Naive thymus-derived CD4-positive, alpha-beta T cell (primary cell): ENCODE measurements at regions of chr13 and their contacts with region 1.

Region 1: DNA sequence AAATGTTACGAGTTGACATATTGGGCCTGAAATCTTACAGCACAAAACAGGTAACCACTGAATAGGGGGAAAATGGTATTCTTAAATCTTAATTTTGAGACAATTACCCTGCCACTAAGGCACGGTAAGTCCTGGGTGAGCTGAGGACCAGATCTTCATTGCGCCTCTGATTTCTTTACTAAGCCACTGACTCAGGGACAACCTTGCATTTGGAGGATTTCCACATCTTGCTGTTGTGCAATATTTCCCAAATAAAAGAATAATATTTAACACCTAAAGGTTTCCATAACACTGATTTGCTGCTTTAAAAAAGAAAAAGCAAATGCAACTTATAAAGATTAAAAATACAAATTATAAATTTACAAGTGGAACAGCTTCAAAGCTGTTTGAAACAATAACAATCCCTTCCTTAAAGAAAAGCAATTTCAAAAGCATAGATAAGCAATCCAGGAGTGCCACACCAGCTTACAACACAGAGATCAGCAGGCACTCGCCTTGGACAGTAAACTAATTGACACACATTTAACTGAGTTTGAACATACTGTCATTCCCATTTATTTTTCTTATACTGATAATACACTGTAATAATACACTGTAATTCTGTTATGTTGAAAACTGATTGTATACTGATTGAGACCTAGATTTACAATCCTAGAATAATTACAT is 79.6 kb upstream of the DOCK9 start:
- DNase-seq: no peak
- ATAC-seq: no peak
- H3K4me3 ChIP-seq: no peak overlapping the region
- H3K4me3 Mint-ChIP-seq: peak overlapping the region in 2 of 10 donors; percentile 8 to 50
- H3K27ac ChIP-seq: no peak overlapping the region
- H3K27ac Mint-ChIP-seq: peak overlapping the region in 8 of 9 donors; percentile 7 to 96 (median 74)
- H3K4me1 ChIP-seq: peaks cover 28 to 78% of the 10 kb centered on the region in 2 donors
- H3K4me1 Mint-ChIP-seq: peaks cover 46 to 99% (median 94%) of the 10 kb centered on the region in 7 donors
- H3K27me3 ChIP-seq: no peaks in the 10 kb centered on the region
- H3K27me3 Mint-ChIP-seq: peaks cover 0 to 19% (median 0%) of the 10 kb centered on the region in 5 donors

Region 2: DNA sequence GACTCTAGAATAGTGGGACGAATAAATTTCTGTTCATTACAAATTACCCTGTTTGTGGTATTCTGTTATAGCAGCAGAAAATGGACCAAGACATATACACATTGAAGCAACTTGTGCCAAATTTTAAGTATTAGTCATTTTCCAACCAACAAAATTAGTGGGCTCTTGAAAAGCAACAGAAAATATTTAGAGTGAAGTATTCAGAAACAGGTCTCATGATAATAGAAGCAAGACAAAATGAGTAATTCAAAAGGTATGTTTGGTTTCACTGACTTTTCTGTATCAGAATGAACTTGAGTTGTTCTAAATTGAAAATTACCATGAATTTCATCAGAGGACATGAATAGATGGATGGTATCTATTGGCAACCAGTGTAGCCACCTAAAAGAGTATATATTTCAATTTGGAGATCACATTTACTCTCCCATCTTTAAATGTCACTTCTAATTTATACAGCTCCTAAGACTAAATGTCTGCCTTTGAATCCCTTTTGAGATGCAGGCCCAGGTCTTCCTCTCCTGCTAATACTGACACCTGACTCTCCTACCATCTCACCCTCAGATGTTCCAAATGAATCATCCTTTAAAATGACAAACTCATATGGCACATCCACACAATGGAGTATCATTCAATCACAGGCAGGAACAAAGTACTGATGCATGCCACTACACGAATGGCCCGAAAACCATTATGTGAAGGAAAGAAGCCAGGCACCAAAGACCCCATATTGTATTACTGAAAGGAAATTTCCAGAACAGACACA is 38.8 kb before region 1 on chr13:
- CTCF ChIA-PET with region 1: no interaction called
- POLR2A ChIA-PET with region 1: no interaction called
- intact Hi-C with region 1: no loop called
- DNase-seq: no peak
- ATAC-seq: no peak
- H3K4me3 ChIP-seq: no peak overlapping the region
- H3K4me3 Mint-ChIP-seq: peak overlapping the region in 1 of 10 donors; percentile 29
- H3K27ac ChIP-seq: no peak overlapping the region
- H3K27ac Mint-ChIP-seq: peak overlapping the region in 6 of 9 donors; percentile 8 to 61 (median 44)
- H3K4me1 ChIP-seq: peaks cover 13 to 34% of the 10 kb centered on the region in 2 donors
- H3K4me1 Mint-ChIP-seq: peaks cover 34 to 90% (median 84%) of the 10 kb centered on the region in 7 donors
- H3K27me3 ChIP-seq: no peaks in the 10 kb centered on the region
- H3K27me3 Mint-ChIP-seq: no peaks in the 10 kb centered on the region

Region 3: DNA sequence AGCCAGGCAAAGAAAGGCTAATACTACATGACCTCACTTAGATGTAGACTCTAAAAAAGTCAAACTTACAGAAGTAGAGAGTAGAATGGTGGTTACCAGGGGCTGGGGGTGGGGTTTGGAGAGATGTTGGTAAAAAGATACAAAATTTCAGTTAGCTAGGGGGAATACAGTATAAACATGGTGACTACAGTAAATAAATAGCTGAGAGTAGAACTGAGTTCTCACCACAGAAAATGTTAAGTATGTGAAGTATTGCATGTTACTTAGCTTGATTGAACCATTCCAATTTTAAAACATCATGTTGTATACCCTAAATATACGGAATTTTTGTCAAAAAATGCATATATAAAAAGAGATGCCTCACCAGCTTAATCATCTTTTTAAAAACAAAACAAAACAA is 12.0 kb before region 1 on chr13:
- CTCF ChIA-PET with region 1: interaction called, 3 read pairs
- POLR2A ChIA-PET with region 1: interaction called, 34 read pairs
- intact Hi-C with region 1: loop called (anchors 1 kb)
- DNase-seq: no peak
- ATAC-seq: no peak
- H3K4me3 ChIP-seq: no peak overlapping the region
- H3K4me3 Mint-ChIP-seq: peak overlapping the region; percentile 60 to 88 (median 80)
- H3K27ac ChIP-seq: peak overlapping the region; percentile 70
- H3K27ac Mint-ChIP-seq: peak overlapping the region; percentile 85 to 97 (median 94)
- H3K4me1 ChIP-seq: peaks cover 79 to 93% of the 10 kb centered on the region in 2 donors
- H3K4me1 Mint-ChIP-seq: peaks cover 64 to 100% (median 89%) of the 10 kb centered on the region in 7 donors
- H3K27me3 ChIP-seq: no peaks in the 10 kb centered on the region
- H3K27me3 Mint-ChIP-seq: peaks cover 0 to 19% (median 0%) of the 10 kb centered on the region in 5 donors